Activated CD4-positive, alpha-beta T cell treated with anti-CD3 and anti-CD28 coated beads, Interleukin-2, amount 10 ng/mL, durations not matched to agents 24 days and 14 days (primary cell): ENCODE measurements at regions of chr4 and their contacts with region 1.

Region 1: DNA sequence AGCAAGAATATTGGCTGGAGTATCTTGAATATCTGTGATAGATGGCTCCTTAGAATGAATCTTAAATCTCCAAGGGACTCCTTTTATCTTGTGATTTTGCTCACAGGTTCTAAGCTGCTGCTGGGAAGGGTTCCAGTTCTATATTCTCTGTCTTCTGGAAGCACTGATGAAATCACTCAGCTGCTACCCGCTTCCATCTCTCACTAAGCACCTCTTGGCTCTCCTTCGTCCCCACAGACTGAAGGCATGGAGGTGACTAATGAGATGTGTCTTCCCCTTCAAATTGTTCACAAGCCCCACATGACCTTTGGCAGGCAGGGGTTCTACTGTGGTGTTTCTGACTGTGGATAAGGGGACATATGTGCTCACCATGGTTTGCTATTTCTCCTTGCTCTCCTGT is 75.9 kb downstream of the C4orf51 start:
- DNase-seq: no peak
- H3K4me3 Mint-ChIP-seq: no peak overlapping the region
- H3K27ac Mint-ChIP-seq: peak overlapping the region; percentile 85
- H3K4me1 Mint-ChIP-seq: peaks cover 27% of the 10 kb centered on the region
- H3K27me3 Mint-ChIP-seq: peaks cover 2% of the 10 kb centered on the region

Region 2: DNA sequence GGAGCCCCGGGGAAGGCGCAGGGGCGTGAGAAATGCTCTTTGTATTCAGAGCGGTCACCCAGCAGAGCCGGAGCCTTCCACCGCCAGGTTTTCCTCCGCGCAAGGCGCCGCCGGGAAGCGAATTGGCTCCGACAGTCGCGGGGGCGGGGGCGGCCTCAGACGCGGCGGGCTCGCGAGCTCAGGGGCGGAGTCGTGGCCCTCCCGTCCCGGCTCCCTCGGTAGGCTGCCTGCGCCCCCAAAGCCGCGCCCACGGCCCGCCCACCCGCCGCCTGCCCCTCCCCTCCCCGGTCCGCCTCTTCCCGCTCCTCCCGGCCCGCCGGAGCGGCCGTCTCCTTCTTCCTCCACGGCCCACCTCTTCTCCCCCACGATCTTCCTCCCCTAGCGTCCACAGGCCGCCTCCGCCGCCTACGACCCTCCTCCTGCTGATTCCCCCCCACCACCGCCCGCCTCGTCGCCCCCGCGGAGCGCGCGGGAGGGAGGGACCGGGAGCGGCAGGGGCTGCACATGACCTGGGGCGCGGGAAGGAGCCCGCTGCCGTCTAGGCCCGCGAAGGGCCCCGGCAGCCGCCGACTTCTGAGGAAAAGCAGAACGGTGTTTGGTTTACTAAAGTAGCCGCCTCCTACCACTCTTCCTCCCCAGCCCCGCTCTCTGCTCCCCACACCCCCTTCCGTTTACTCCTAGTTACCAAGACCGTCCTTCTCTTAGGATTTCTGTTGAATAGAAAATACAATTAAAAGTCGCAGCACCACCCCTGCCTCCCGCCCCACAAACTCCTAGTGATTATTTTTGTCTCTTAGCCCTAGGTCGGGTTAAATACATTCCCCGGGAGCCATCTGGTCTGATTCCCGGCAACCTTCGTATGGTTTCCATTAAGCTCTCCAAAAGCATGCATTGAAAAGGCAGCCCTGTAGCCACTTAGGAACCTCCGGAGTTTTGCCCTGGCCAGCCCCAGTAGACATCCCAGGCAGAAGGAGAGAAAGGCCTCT is 22.6 kb before region 1 on chr4:
- intact Hi-C with region 1: loop called (anchors 2 kb)
- DNase-seq: peak; percentile 96
- H3K4me3 Mint-ChIP-seq: peak overlapping the region; percentile 77
- H3K27ac Mint-ChIP-seq: peak overlapping the region; percentile 76
- H3K4me1 Mint-ChIP-seq: peaks cover 18% of the 10 kb centered on the region
- H3K27me3 Mint-ChIP-seq: peaks cover 2% of the 10 kb centered on the region